ENCODE measurements at regions of chr19 and their contacts with region 1.

Region 1: DNA sequence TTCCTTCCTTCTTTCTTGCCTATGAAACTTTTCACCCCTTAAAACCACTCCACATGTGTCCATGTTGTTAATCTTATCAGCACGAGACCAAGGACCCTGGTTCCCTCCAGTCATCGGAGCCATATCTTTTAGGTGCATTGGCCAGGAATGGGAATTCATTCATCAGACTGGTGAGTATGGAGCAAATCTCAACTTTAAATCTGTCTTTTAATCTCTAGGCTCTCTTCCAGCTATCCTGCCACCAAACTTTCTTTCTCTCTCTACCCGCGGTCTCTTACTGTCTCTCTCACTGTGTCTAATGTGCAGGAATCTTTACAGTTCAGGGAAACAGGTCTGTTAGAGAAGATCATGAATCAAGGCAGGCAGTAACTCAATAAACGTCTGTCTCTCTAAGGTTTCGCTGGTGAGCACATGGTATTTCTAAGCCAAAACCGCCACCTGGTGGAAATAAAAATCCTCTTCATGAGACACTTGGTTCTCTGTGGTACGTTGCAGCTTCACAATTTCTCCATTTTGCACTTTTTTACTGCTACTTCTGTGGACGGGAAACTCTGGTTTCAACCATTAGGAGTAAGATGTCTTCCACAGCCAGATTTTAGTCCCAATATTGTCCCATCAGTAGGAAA is 16.1 kb downstream of the LGALS16 start:
- DNase-seq: peak in 5 of 7 donors; percentile 22 to 57 (median 41)
- H3K4me3 ChIP-seq: no peak overlapping the region
- H3K27ac ChIP-seq: no peak overlapping the region
- H3K4me1 ChIP-seq: no peaks in the 10 kb centered on the region
- H3K27me3 ChIP-seq: no peaks in the 10 kb centered on the region
- CTCF ChIP-seq: peak; percentile 43 to 74 (median 63)
- POLR2A ChIP-seq: no peak

Region 2: GRCh38 chr19:39435499-39436349 is 236.1 kb before region 1 on chr19 and contains the start of gene RPS16:
- intact Hi-C with region 1: loop called in 1 of 2 experiments (anchors 10 kb)
- DNase-seq: peak; percentile 98 to 99 (median 99)
- H3K4me3 ChIP-seq: peak within 1 kb of the TSS; percentile 70 to 95 (median 83)
- H3K27ac ChIP-seq: peak within 1 kb of the TSS; percentile 35 to 90 (median 80)
- H3K4me1 ChIP-seq: peaks cover 18 to 22% of the 10 kb centered on the region in 2 donors
- H3K27me3 ChIP-seq: no peaks in the 10 kb centered on the region
- CTCF ChIP-seq: peak in 1 of 6 experiments; percentile 5
- POLR2A ChIP-seq: peak; percentile 88 to 97
- total RNA-seq, gene RPS16: 229 to 1,939 (median 1,252) TPM

Region 3: DNA sequence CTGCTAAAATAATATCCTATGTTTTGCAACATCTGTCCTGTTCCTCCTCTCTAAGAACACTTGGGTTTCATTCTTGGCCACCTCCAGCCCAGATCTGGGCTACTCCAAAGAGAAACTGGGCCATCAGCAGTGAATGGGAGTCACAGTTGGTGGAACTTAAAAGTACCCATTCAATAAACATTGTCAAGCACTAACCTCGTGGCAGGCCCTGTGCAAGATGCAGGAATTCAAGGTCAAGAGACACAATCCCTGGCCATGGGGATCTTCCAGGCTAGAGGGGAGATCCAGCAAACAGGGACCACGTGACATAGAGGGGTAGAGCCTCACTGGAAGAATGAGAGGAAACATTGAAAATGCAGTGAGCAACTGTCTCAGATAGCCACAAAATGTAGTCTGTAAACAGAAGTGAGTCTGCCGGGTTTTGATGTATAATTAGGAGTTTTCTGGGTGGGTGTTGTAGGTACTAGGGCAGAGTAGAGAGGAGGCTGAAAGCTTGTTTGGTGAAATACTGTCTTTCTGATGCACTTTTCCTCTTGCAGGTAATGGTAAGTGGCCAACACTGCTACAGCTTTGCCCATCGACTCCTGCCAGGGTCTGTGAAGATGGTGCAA is 117.0 kb before region 1 on chr19:
- intact Hi-C with region 1: loop called (anchors 2 to 5 kb)
- DNase-seq: no peak
- H3K4me3 ChIP-seq: no peak overlapping the region
- H3K27ac ChIP-seq: no peak overlapping the region
- H3K4me1 ChIP-seq: no peaks in the 10 kb centered on the region
- H3K27me3 ChIP-seq: no peaks in the 10 kb centered on the region
- CTCF ChIP-seq: no peak
- POLR2A ChIP-seq: no peak

Measured in adrenal gland (tissue), 19 donors.